ENCODE measurements at regions of chr4 and their contacts with region 1.

Region 1: GRCh38 chr4:17447675-17448298 is 64.1 kb downstream of the QDPR start:
- DNase-seq: peak; percentile 60
- CTCF ChIP-seq: peak; percentile 70

Region 2: GRCh38 chr4:17347445-17347844 is 100.3 kb before region 1 on chr4:
- CTCF ChIA-PET with region 1: interaction called, 20 read pairs
- POLR2A ChIA-PET with region 1: no interaction called
- DNase-seq: peak; percentile 42
- CTCF ChIP-seq: peak; percentile 41

Region 3: GRCh38 chr4:17436750-17437090 is 11.1 kb before region 1 on chr4:
- CTCF ChIA-PET with region 1: interaction called, 26 read pairs
- POLR2A ChIA-PET with region 1: no interaction called
- DNase-seq: no peak
- CTCF ChIP-seq: no peak

Region 4: DNA sequence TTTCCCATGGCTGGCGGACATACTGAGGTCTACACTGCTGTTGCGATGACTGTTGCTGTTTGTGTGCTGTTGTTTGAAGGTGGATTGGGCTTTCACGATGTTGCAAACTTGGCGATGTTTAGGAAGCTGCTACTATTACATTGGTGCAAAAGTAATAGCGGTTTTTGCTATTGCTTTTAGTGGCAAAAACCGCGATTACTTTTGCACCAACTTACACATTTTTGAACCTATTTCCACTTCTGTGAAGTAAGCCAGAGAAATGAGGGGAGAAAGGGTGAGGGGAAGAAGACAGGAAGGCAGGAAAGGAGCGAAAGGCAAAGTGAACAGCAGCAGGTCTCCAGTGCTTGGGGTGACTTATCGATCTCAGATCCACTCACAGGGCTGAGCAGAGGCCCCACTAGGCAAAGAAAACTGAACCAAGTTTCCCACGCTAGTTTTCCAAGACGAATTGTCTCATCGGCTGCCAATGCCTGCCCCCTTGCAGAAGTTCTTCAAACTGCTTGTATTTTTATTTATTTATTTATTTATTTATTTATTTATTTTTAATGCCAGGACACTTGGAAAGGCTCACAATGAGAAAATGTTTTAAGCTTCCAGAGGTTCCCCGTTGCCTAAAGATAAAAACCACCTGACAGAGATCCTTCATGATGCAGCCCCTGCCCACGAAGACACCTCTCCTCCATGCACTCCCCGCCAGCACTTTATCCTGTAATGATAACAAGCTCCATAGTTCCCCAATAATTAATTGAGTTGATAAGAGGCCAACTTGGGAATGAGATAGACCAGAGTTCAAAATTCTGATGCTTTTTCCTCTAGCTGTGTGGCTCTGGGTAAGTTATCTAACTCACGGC is 20.8 kb after region 1 on chr4:
- CTCF ChIA-PET with region 1: interaction called, 19 read pairs
- POLR2A ChIA-PET with region 1: no interaction called
- DNase-seq: peak; percentile 29
- CTCF ChIP-seq: peak; percentile 1